CD14-positive monocyte (primary cell): ENCODE measurements at regions of chr1 and their contacts with region 1.

Region 1: DNA sequence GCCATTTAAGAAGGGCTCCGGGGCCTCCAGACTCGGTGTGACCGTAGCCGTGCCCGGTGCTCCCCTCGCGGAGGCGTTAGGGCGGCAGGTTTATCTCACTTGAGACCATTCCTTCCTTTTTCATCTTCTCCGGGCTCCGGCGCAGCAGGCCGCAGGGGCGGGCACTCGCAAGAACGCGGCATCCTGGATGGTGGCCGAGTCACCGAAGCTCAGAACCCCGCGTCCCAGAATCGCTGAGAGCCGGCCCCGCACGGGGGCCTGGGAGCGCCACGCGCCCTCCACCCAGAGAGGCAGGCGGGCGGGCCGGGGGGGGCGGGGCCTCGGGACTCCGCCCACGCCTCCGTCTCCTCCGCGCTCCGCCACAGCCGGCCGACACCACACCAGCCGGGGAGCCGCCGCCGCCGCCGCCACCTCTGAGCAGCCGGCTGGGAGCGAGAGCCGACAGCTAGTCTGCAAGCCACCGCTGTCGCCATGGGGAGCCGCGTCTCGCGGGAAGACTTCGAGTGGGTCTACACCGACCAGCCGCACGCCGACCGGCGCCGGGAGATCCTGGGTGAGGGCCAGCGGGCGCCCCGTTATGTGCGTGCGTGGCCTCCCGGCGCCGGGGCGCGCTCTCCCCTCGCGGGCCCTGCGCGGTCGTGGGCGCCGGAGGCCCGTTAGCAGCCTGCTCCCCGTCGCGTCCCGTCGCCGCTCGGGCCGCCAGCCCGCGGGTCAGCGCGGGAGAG is at the start of gene DEGS1:
- DNase-seq: peak; percentile 77 to 80 (median 77)
- H3K4me3 ChIP-seq: peak within 1 kb of the TSS; percentile 67 to 91 (median 84)
- H3K4me3 Mint-ChIP-seq: peak within 1 kb of the TSS; percentile 87 to 94
- H3K27ac ChIP-seq: peak within 1 kb of the TSS; percentile 70 to 91
- H3K27ac Mint-ChIP-seq: peak within 1 kb of the TSS; percentile 75 to 91 (median 89)
- H3K4me1 ChIP-seq: peaks cover 27 to 33% of the 10 kb centered on the region in 2 donors
- H3K4me1 Mint-ChIP-seq: peaks cover 32% of the 10 kb centered on the region
- H3K27me3 ChIP-seq: no peaks in the 10 kb centered on the region
- H3K27me3 Mint-ChIP-seq: peaks cover 0 to 1% (median 0%) of the 10 kb centered on the region in 3 donors
- CTCF ChIP-seq: no peak
- polyA plus RNA-seq, gene DEGS1: 35.0 to 137 (median 118) TPM

Region 2: DNA sequence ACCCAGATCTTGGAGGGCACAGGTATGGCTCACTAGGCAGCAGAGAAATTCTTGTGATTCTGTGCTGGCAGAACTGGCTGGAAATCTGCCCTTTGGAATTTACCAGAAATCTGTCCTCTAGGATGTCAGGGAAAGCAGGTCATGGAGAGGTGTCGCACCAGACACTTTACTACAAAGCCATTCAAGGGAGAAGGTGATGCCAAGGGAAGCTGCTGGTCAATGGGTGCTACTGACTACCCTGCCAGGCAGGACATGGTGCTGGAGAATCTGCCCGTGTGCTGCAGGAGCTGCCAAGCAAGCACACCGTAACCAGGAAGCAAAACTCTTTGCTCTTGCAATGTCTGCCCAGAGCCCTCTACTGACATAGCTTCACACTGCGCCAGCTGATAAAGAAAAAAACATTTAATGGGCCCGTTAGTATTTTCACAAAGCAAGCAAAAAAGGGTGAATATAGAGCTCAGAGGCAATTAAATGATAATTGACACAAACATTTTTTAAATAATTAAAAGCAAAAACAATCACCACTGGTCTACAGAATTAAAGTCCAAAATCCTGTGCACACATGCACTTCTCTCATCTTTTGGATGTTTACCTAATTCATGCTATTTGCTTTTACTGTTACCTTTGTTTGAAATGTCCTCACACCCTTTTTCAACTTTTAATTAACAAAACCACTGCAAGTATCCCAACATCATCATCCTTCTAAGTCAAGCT is 76.3 kb before region 1 on chr1:
- intact Hi-C with region 1: no loop called
- DNase-seq: peak in 2 of 3 donors; percentile 6 to 10
- H3K4me3 ChIP-seq: no peak overlapping the region
- H3K4me3 Mint-ChIP-seq: peak overlapping the region in 1 of 2 donors; percentile 40
- H3K27ac ChIP-seq: no peak overlapping the region
- H3K27ac Mint-ChIP-seq: no peak overlapping the region
- H3K4me1 ChIP-seq: peaks cover 0 to 3% of the 10 kb centered on the region in 2 donors
- H3K4me1 Mint-ChIP-seq: peaks cover 8% of the 10 kb centered on the region
- H3K27me3 ChIP-seq: peaks cover 0 to 2% of the 10 kb centered on the region in 2 donors
- H3K27me3 Mint-ChIP-seq: peaks cover 2 to 9% (median 3%) of the 10 kb centered on the region in 3 donors
- CTCF ChIP-seq: no peak

Region 3: GRCh38 chr1:224217655-224218623 is 34.9 kb after region 1 on chr1:
- intact Hi-C with region 1: loop called in 1 of 2 experiments (anchors 5 kb)
- DNase-seq: peak in 2 of 3 donors; percentile 12 to 21
- H3K4me3 ChIP-seq: no peak overlapping the region
- H3K4me3 Mint-ChIP-seq: no peak overlapping the region
- H3K27ac ChIP-seq: peak overlapping the region in 1 of 2 donors; percentile 27
- H3K27ac Mint-ChIP-seq: peak overlapping the region in 4 of 7 donors; percentile 1 to 71 (median 44)
- H3K4me1 ChIP-seq: peaks cover 14 to 17% of the 10 kb centered on the region in 2 donors
- H3K4me1 Mint-ChIP-seq: peaks cover 12% of the 10 kb centered on the region
- H3K27me3 ChIP-seq: no peaks in the 10 kb centered on the region
- H3K27me3 Mint-ChIP-seq: peaks cover 0 to 2% (median 0%) of the 10 kb centered on the region in 3 donors
- CTCF ChIP-seq: no peak